GM10248 (cell line): ENCODE measurements at regions of chr3 and their contacts with region 1.

Region 1: DNA sequence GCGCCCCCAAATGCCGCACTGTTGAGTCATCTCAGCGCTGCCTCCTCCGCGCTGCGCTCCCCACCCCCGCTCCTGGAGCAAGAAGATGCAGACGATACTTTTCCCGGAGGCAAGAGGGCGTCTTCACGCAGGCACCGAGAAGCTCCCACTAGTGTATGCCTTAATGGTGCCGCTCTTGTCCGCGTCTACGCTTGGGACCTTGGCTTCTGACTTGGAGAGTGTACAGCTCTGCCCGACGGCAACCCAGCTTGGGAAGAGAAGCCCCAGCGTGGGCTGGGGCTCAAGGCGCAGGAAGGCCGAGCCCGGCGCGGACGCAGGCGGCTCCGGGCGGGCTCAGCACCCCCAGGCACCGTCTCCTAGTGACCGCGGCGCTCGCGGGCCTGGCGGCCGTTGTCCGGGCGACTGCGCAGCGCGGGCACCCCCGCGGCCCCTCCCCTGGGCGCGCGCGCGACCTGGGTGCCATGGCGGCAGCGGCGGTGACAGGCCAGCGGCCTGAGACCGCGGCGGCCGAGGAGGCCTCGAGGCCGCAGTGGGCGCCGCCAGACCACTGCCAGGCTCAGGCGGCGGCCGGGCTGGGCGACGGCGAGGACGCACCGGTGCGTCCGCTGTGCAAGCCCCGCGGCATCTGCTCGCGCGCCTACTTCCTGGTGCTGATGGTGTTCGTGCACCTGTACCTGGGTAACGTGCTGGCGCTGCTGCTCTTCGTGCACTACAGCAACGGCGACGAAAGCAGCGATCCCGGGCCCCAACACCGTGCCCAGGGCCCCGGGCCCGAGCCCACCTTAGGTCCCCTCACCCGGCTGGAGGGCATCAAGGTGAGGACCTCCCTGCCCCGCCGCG is at the start of gene P4HTM:
- DNase-seq: peak; percentile 77
- CTCF ChIP-seq: peak; percentile 23

Region 2: DNA sequence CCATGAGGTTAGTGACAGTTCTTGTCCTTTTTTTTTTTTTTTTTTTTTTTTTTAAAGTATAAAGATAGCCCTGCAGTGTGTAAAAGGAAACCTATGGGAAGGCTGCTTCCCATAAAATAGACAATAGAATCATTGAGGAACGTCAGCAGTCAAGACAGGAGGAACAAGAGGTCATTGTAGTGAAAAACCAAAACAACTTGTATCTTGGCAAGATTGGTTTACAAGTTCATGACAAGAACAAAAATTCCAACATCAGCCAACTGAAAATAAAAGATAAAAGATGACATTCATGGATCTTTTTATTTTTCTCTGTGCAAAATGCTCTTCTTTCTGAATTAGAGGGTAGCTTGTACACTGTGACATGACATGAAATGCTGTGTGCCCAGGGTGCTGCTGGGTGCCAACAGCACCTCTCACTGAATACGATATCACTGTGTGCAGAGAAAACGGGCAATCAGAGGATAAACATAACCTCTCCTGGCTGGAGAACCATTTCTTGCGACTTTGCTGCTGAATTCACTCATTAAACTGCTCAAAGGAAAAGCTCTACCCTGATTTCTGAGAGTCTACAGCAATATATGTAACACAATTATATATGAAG is 242.9 kb before region 1 on chr3:
- CTCF ChIA-PET with region 1: no interaction called
- POLR2A ChIA-PET with region 1: no interaction called
- DNase-seq: no peak
- CTCF ChIP-seq: no peak

Region 3: DNA sequence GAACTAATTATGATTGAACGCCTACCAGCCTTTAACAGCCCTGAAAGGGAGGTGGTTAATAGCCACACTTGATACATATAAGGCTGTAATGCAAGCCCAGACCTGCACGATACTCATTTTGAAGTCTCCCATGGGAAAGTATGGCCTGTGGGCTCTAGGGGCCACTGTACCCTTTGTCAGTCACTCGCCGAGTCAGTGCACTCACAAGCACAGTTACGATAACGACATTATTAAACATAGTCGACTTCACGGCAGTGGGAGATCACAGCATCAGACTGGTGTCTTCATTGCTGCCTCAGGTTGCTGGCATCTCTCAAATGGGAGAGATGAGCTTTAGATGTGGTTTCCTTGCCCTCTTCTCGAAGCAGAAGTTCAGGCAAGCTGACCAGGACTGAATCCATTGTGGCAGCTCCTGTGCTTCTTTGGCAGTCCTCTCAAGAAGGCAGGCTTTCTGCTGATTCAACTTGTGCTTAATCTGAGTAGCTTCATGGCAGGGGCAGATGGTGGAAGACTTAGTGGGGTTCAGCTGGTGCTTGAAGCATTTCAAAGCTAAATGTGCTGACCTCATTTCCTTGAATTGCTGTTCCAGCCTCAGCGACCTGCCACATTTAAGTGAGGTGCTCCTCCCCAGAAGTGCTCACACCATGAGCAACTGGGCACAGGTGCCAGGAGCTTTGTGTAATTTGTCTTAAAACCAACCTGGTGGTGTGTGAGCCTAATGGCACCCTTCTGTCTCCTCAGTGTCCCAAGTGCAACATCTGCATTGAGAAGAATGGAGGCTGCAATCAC is 15.7 kb before region 1 on chr3:
- CTCF ChIA-PET with region 1: interaction called, 65 read pairs
- POLR2A ChIA-PET with region 1: no interaction called
- DNase-seq: no peak
- CTCF ChIP-seq: no peak

Region 4: DNA sequence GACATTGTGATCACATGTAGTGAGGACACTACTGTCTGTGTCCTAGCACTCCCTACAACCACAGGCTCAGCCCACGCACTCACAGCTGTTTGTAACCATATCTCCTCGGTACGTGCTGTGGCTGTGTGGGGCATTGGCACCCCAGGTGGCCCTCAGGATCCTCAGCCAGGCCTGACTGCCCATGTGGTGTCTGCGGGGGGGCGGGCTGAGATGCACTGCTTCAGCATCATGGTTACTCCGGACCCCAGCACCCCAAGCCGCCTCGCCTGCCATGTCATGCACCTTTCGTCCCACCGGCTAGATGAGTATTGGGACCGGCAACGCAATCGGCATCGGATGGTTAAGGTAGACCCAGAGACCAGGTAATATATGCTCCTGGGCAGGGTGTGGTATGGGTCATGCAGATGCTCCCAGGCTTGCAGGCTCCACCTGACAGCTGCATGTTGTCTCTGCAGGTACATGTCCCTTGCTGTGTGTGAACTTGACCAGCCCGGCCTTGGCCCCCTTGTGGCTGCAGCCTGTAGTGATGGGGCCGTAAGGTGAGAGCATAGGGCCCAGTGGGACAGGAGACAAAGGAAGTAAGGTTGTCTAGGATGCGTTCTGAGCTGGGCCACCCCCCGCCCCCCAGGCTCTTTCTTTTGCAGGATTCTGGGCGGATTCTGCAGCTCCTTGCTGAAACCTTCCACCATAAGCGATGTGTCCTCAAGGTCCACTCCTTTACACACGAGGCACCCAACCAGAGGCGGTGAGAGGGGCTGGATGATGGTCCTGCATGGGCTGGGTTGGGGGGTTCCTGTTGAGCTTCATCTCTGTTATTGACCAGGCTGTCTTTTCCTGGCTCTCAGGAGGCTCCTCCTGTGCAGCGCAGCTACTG is 24.0 kb after region 1 on chr3:
- CTCF ChIA-PET with region 1: interaction called, 57 read pairs
- POLR2A ChIA-PET with region 1: interaction called, 4 read pairs
- DNase-seq: peak; percentile 52
- CTCF ChIP-seq: peak; percentile 71

Region 5: GRCh38 chr3:49093853-49094767 is 104.1 kb after region 1 on chr3 and contains the start of gene QRICH1:
- CTCF ChIA-PET with region 1: interaction called, 41 read pairs
- POLR2A ChIA-PET with region 1: interaction called, 3 read pairs
- DNase-seq: peak; percentile 95
- CTCF ChIP-seq: peak; percentile 58

Region 6: GRCh38 chr3:49445381-49445780 is 455.4 kb after region 1 on chr3:
- CTCF ChIA-PET with region 1: interaction called, 16 read pairs
- POLR2A ChIA-PET with region 1: no interaction called
- DNase-seq: no peak
- CTCF ChIP-seq: no peak